ENCODE measurements at regions of chr14 and their contacts with region 1.

Region 1: GRCh38 chr14:58491593-58491992 is 64.1 kb downstream of the KIAA0586 start:
- DNase-seq: no peak
- H3K4me3 ChIP-seq: no peak overlapping the region
- H3K27ac ChIP-seq: no peak overlapping the region
- H3K4me1 ChIP-seq: no peaks in the 10 kb centered on the region
- H3K27me3 ChIP-seq: no peaks in the 10 kb centered on the region
- CTCF ChIP-seq: no peak

Region 2: GRCh38 chr14:58535044-58535443 is 43.5 kb after region 1 on chr14:
- CTCF ChIA-PET with region 1: no interaction called
- POLR2A ChIA-PET with region 1: no interaction called
- intact Hi-C with region 1: loop called (anchors 1 kb)
- DNase-seq: no peak
- H3K4me3 ChIP-seq: no peak overlapping the region
- H3K27ac ChIP-seq: no peak overlapping the region
- H3K4me1 ChIP-seq: no peaks in the 10 kb centered on the region
- H3K27me3 ChIP-seq: no peaks in the 10 kb centered on the region
- CTCF ChIP-seq: no peak

Region 3: GRCh38 chr14:58565832-58566231 is 74.2 kb after region 1 on chr14:
- CTCF ChIA-PET with region 1: no interaction called
- POLR2A ChIA-PET with region 1: no interaction called
- intact Hi-C with region 1: no loop called
- DNase-seq: no peak
- H3K4me3 ChIP-seq: no peak overlapping the region
- H3K27ac ChIP-seq: no peak overlapping the region
- H3K4me1 ChIP-seq: no peaks in the 10 kb centered on the region
- H3K27me3 ChIP-seq: no peaks in the 10 kb centered on the region
- CTCF ChIP-seq: no peak

Measured in PC-9 (cell line).